CD14-positive monocyte (primary cell): ENCODE measurements at regions of chr9 and their contacts with region 1.

Region 1: DNA sequence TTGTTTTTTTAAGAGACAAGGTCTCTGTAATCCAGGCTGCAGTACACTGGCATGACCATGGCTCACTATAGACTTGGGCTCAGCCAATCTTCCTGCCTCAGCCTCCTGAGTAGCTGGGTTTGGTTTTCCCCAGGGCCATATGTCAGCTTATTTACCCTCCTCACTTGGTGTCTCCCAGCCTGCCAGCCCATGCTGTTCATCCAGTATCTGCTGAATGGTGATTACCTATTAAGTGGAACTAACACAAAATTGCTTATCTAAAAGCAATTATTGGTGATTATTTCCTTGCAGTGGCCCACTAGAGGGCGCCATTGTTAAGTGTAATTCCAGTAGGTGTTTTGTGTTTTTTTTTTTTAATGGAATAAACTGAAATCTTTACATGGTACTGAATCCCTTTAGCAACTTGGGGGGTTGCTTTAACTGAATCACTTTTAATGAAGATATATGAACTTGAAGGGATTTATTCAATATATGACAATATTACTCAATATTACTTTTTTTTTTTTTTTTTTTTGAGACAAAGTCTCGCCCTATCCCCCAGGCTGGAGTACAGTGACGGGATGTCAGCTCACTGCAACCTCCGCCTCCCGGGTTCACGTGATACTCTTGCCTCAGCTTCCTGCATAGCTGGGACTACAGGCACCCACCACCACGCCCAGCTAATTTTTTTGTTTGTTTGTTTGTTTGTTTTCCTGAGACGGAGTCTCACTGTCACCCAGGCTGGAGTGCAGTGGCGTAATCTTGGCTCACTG is 13.8 kb downstream of the EXOSC2 start:
- DNase-seq: peak; percentile 54 to 74 (median 66)
- H3K4me3 ChIP-seq: no peak overlapping the region
- H3K4me3 Mint-ChIP-seq: no peak overlapping the region
- H3K27ac ChIP-seq: no peak overlapping the region
- H3K27ac Mint-ChIP-seq: no peak overlapping the region
- H3K4me1 ChIP-seq: peaks cover 4 to 5% of the 10 kb centered on the region in 2 donors
- H3K4me1 Mint-ChIP-seq: peaks cover 5% of the 10 kb centered on the region
- H3K27me3 ChIP-seq: no peaks in the 10 kb centered on the region
- H3K27me3 Mint-ChIP-seq: peaks cover 2 to 7% (median 3%) of the 10 kb centered on the region in 3 donors
- CTCF ChIP-seq: peak; percentile 88

Region 2: DNA sequence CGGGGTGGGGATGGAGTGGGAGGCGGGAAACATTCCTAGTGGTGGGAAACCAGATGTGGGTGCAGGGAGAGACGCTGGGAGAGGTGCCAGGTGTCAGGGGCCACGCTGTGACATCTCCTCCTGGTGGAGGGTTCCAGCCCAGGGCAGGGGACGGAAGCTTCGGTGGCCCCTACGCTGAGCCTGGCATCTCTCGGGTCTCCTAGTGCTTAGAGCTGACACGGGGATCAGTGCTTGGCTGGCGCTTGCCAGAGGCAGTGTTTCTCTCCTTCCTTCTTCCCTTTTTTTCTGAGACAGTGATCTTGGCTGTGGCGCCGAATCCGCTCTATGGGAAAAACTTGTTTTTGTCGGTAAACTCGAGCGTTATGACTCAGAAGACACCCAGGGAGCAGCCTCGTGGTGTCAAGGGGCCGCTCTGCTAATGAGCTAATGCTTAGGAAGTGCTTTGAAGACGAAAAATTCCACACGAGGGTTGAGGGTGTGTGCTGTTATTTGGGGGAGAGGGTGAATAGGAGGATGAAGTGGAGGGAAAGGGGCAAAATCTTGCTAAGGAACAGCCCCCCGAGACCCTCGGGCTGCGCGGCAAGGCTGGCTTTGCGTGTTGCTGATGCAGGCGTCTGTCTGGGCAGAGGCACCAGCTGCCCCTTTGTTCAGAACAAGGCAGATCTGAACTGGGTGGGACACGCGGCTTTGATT is 1508.9 kb before region 1 on chr9:
- intact Hi-C with region 1: no loop called
- DNase-seq: peak; percentile 70 to 79 (median 72)
- H3K4me3 ChIP-seq: no peak overlapping the region
- H3K4me3 Mint-ChIP-seq: peak overlapping the region in 1 of 2 donors; percentile 65
- H3K27ac ChIP-seq: no peak overlapping the region
- H3K27ac Mint-ChIP-seq: peak overlapping the region in 4 of 7 donors; percentile 36 to 79 (median 59)
- H3K4me1 ChIP-seq: peaks cover 13 to 21% of the 10 kb centered on the region in 2 donors
- H3K4me1 Mint-ChIP-seq: peaks cover 19% of the 10 kb centered on the region
- H3K27me3 ChIP-seq: peaks cover 0 to 6% of the 10 kb centered on the region in 2 donors
- H3K27me3 Mint-ChIP-seq: peaks cover 18 to 34% (median 21%) of the 10 kb centered on the region in 3 donors
- CTCF ChIP-seq: no peak

Region 3: DNA sequence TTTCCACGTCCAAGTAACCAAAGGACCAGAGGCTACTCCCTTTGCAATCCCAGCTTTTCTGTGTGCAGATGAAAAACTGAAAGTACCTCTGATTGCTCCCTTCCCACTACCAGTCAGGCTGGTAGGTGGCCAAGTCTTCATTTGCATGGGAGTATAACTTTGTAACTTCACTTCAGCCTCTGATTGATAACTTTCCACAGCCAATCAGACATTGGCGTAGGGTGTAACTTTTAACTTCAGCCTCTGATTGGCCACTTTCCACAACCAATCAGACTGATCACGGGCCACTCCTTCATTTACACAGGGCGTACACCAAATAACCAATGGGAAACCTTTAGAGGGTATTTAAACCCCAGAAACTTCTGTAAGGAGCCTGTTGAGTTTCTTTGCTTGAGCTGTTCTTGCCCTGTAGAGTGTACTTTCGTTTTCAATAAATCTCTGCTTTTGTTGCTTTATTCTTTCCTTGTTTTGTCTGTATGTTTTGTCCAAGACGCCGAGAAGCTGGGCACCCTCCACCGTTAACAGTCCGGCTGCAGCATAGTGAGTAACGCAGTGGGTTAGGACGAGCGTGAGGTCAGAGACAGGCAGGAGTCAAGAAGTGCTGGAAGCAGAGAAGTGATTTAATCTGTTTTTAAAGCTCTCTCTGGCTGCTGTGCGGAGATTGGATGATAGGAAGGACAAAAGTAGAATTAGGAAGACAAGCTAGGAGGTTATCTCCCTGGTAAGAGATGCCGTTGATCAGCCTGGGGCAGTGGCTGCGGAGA is 17.3 kb before region 1 on chr9:
- intact Hi-C with region 1: no loop called
- DNase-seq: no peak
- H3K4me3 ChIP-seq: no peak overlapping the region
- H3K4me3 Mint-ChIP-seq: peak overlapping the region in 1 of 2 donors; percentile 46
- H3K27ac ChIP-seq: no peak overlapping the region
- H3K27ac Mint-ChIP-seq: no peak overlapping the region
- H3K4me1 ChIP-seq: peaks cover 20 to 22% of the 10 kb centered on the region in 2 donors
- H3K4me1 Mint-ChIP-seq: peaks cover 29% of the 10 kb centered on the region
- H3K27me3 ChIP-seq: peaks cover 0 to 9% of the 10 kb centered on the region in 2 donors
- H3K27me3 Mint-ChIP-seq: peaks cover 10 to 25% (median 21%) of the 10 kb centered on the region in 3 donors
- CTCF ChIP-seq: no peak

Region 4: GRCh38 chr9:130860458-130861316 is 153.3 kb after region 1 on chr9:
- intact Hi-C with region 1: loop called (anchors 2 to 5 kb)
- DNase-seq: peak; percentile 1 to 28 (median 8)
- H3K4me3 ChIP-seq: no peak overlapping the region
- H3K4me3 Mint-ChIP-seq: peak overlapping the region in 1 of 2 donors; percentile 28
- H3K27ac ChIP-seq: no peak overlapping the region
- H3K27ac Mint-ChIP-seq: peak overlapping the region in 3 of 7 donors; percentile 24 to 38 (median 26)
- H3K4me1 ChIP-seq: no peaks in the 10 kb centered on the region
- H3K4me1 Mint-ChIP-seq: peaks cover 4% of the 10 kb centered on the region
- H3K27me3 ChIP-seq: no peaks in the 10 kb centered on the region
- H3K27me3 Mint-ChIP-seq: peaks cover 0 to 2% (median 0%) of the 10 kb centered on the region in 3 donors
- CTCF ChIP-seq: no peak

Region 5: DNA sequence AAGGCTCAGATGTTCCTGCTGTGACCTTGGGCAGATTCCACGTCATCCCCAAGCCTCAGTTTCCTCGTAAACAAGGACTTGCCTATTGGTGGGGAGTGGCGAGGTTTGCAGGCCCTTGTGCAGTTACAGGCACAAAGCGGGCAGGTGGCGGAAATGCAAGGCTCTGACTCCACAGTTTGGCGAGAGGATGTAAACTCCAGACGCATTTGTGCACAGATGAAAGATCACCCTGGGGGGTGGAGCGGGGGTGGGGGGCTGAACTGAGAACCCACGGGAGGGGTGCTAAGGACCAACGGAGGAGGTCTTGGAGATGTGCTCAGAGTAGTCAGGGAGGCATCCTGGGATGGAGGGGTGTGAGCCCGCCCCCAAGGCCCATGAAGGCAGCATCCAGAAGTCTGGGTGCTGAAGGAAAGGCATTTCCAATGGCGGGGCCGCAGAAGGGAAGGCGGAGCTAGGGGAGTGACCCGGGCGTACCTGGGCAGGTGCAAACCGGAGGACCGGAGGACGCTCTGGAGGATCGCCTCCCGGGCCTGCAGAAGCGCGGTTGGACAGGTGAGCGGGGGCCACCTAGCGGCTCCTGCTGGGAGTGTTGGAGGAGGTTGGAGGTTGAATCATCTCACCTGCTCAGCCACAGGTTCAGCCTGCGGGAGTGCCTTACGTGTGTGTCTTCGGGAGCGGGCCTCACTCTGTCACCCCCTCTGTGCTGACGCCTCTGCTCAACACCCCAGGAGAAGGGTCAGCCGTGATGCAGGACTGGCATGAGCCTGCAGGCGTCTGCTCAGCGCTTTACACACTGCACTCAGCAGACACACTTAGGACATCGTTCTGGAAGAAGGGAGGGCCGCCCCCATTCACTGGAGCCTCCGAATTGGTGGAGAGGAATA is 233.5 kb after region 1 on chr9:
- intact Hi-C with region 1: loop called (anchors 2 to 10 kb)
- DNase-seq: peak; percentile 9 to 42 (median 37)
- H3K4me3 ChIP-seq: no peak overlapping the region
- H3K4me3 Mint-ChIP-seq: peak overlapping the region in 1 of 2 donors; percentile 88
- H3K27ac ChIP-seq: no peak overlapping the region
- H3K27ac Mint-ChIP-seq: no peak overlapping the region
- H3K4me1 ChIP-seq: peaks cover 0 to 10% of the 10 kb centered on the region in 2 donors
- H3K4me1 Mint-ChIP-seq: peaks cover 8% of the 10 kb centered on the region
- H3K27me3 ChIP-seq: peaks cover 20 to 54% of the 10 kb centered on the region in 2 donors
- H3K27me3 Mint-ChIP-seq: peaks cover 46 to 73% (median 61%) of the 10 kb centered on the region in 3 donors
- CTCF ChIP-seq: peak; percentile 95

Region 6: DNA sequence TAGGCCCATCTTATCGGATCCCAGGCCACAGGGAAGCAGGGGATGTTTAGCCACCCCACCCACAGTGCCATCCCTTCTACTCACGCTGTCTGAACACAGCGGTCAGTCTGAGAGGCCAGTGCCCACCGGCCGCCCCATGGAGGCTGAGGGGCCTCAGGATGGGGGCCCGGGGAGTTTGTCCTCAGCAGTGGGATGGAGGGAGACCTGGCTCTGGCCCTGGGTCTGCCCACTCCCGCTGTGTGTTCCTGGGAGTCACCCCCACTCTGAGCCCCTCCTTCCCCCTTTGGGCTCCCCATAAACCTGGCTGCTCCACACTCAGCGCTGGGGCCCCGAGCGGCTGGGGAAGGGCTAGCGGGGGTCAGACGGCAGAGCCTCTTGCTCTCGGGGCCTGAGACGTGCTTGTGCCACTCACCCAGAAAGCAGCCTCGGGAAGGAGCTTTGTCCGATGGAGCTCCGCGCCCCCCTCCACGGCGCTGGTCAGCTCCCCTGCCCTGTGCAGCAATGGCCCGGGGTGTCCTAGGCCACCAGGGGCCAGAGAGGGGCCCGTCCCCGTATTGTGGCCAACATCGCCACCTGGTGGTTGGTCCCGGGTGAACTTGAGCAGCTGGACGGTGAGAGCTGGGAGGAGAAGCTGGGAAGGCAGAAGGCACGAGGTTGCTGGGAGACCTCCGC is 290.7 kb after region 1 on chr9:
- intact Hi-C with region 1: loop called (anchors 2 to 10 kb)
- DNase-seq: peak; percentile 39 to 62 (median 42)
- H3K4me3 ChIP-seq: no peak overlapping the region
- H3K4me3 Mint-ChIP-seq: peak overlapping the region in 1 of 2 donors; percentile 44
- H3K27ac ChIP-seq: no peak overlapping the region
- H3K27ac Mint-ChIP-seq: no peak overlapping the region
- H3K4me1 ChIP-seq: peaks cover 32 to 37% of the 10 kb centered on the region in 2 donors
- H3K4me1 Mint-ChIP-seq: peaks cover 8% of the 10 kb centered on the region
- H3K27me3 ChIP-seq: no peaks in the 10 kb centered on the region
- H3K27me3 Mint-ChIP-seq: peaks cover 2 to 14% (median 12%) of the 10 kb centered on the region in 3 donors
- CTCF ChIP-seq: peak; percentile 81